Activated CD4-positive, alpha-beta T cell treated with anti-CD3 and anti-CD28 coated beads, Interleukin-2, amount 10 ng/mL, durations not matched to agents 7 days and 5 days (primary cell): ENCODE measurements at regions of chr5 and their contacts with region 1.

Region 1: GRCh38 chr5:131589510-131590348 is 45.3 kb downstream of the RAPGEF6 start:
- DNase-seq: peak; percentile 42
- H3K4me3 Mint-ChIP-seq: no peak overlapping the region
- H3K27ac Mint-ChIP-seq: no peak overlapping the region
- H3K4me1 Mint-ChIP-seq: peaks cover 40% of the 10 kb centered on the region
- H3K27me3 Mint-ChIP-seq: no peaks in the 10 kb centered on the region

Region 2: GRCh38 chr5:131109540-131110255 is 480.0 kb before region 1 on chr5:
- CTCF ChIA-PET with region 1: no interaction called
- POLR2A ChIA-PET with region 1: no interaction called
- DNase-seq: peak; percentile 57
- H3K4me3 Mint-ChIP-seq: no peak overlapping the region
- H3K27ac Mint-ChIP-seq: no peak overlapping the region
- H3K4me1 Mint-ChIP-seq: peaks cover 9% of the 10 kb centered on the region
- H3K27me3 Mint-ChIP-seq: peaks cover 2% of the 10 kb centered on the region

Region 3: GRCh38 chr5:131296213-131296672 is 293.5 kb before region 1 on chr5:
- CTCF ChIA-PET with region 1: no interaction called
- POLR2A ChIA-PET with region 1: no interaction called
- DNase-seq: peak; percentile 30
- H3K4me3 Mint-ChIP-seq: no peak overlapping the region
- H3K27ac Mint-ChIP-seq: peak overlapping the region; percentile 74
- H3K4me1 Mint-ChIP-seq: peaks cover 72% of the 10 kb centered on the region
- H3K27me3 Mint-ChIP-seq: no peaks in the 10 kb centered on the region

Region 4: GRCh38 chr5:132001647-132002561 is 412.2 kb after region 1 on chr5:
- CTCF ChIA-PET with region 1: interaction called, 43 read pairs
- POLR2A ChIA-PET with region 1: no interaction called
- DNase-seq: no peak
- H3K4me3 Mint-ChIP-seq: peak overlapping the region; percentile 35
- H3K27ac Mint-ChIP-seq: peak overlapping the region; percentile 79
- H3K4me1 Mint-ChIP-seq: peaks cover 56% of the 10 kb centered on the region
- H3K27me3 Mint-ChIP-seq: peaks cover 7% of the 10 kb centered on the region

Region 5: GRCh38 chr5:132059043-132059695 is 469.4 kb after region 1 on chr5:
- CTCF ChIA-PET with region 1: interaction called, 14 read pairs
- POLR2A ChIA-PET with region 1: no interaction called
- DNase-seq: peak; percentile 39
- H3K4me3 Mint-ChIP-seq: no peak overlapping the region
- H3K27ac Mint-ChIP-seq: no peak overlapping the region
- H3K4me1 Mint-ChIP-seq: peaks cover 71% of the 10 kb centered on the region
- H3K27me3 Mint-ChIP-seq: peaks cover 6% of the 10 kb centered on the region